Dorsolateral prefrontal cortex (tissue), 120 donors: ENCODE measurements at regions of chr18 and their contacts with region 1.

Region 1: GRCh38 chr18:67104700-67105284 is 411.7 kb downstream of the DSEL start:
- DNase-seq: peak; percentile 18 to 83 (median 60)
- H3K4me3 ChIP-seq: peak overlapping the region in 13 of 59 donors; percentile 0 to 26 (median 16)
- H3K27ac ChIP-seq: no peak overlapping the region
- H3K27me3 ChIP-seq: no peaks in the 10 kb centered on the region
- CTCF ChIP-seq: peak; percentile 22 to 93 (median 74)

Region 2: GRCh38 chr18:67035026-67035425 is 69.8 kb before region 1 on chr18:
- intact Hi-C with region 1: no loop called
- DNase-seq: no peak
- H3K4me3 ChIP-seq: no peak overlapping the region
- H3K27ac ChIP-seq: no peak overlapping the region
- H3K27me3 ChIP-seq: no peaks in the 10 kb centered on the region
- CTCF ChIP-seq: no peak

Region 3: DNA sequence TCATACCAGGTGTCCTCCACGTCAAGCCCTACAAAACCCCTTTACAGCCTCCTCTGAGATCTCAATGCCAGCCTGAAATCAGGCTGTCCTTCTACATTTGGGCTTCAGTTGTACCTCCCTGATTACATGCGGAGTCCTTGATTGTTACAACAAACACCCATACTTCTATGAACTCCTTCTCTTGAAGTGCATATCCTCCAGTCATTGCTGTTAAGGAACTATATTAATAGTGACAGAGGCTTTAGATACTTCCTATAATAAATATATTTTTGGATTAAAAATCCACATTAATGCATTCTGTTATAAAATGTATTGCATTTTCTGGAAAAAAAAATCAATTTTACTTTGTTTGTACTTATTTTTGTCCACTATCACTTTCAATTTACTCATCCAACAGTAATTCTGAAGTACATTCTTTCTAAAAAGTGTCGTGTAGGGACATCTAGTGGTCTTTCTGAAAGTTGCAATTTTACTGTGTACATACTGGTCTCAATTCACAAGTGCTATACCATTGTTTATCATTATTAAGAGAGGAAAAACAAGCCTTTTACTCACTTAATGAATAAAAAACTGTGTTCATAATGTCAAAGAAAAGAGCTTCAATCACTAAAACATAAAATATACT is 95.3 kb after region 1 on chr18:
- intact Hi-C with region 1: loop called (anchors 2 to 5 kb)
- DNase-seq: no peak
- H3K4me3 ChIP-seq: peak overlapping the region in 5 of 59 donors; percentile 3 to 28 (median 19)
- H3K27ac ChIP-seq: no peak overlapping the region
- H3K27me3 ChIP-seq: peaks cover 0 to 12% (median 0%) of the 10 kb centered on the region in 45 donors
- CTCF ChIP-seq: peak; percentile 55 to 96 (median 78)

Region 4: GRCh38 chr18:67916097-67916496 is 811.3 kb after region 1 on chr18:
- intact Hi-C with region 1: no loop called
- DNase-seq: peak in 1 of 10 donors; percentile 15
- H3K4me3 ChIP-seq: no peak overlapping the region
- H3K27ac ChIP-seq: no peak overlapping the region
- H3K27me3 ChIP-seq: no peaks in the 10 kb centered on the region
- CTCF ChIP-seq: no peak